Right ventricle myocardium superior (tissue), 1 donor: ENCODE measurements at regions of chr3 and their contacts with region 1.

Region 1: DNA sequence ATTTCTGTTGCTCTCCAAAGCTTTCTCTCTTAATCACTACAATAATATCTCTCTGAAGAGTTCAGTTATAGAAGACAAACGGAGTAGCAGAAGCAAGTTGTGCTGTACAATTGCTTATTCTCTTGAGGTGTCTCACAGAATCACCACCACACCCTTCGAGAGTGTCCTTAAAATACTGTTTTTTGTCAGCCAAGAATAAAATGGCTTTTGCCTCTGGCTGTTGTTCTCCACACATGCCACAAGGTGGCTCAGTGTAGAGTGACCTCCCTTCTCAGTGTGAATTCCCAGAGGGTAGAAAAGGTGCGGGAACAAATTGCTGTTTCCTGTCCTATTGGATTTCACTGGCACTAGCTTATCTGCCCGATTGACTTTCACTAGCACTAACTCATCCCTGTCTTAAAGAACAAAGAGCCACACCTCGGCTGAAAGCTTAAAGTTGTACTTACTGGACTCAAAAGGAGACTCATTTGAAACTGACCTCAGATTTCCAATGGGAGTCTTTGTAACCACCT is 134.2 kb upstream of the SATB1 start:
- DNase-seq: no peak
- ATAC-seq: peak; percentile 67

Region 2: GRCh38 chr3:18988614-18989229 is 429.3 kb after region 1 on chr3:
- intact Hi-C with region 1: loop called (anchors 5 kb)
- DNase-seq: no peak
- ATAC-seq: no peak